ENCODE measurements at regions of chr1 and their contacts with region 1.

Region 1: GRCh38 chr1:89065079-89065868 is at the start of gene GBP1:
- DNase-seq: peak; percentile 58
- ATAC-seq: peak; percentile 70
- H3K4me3 ChIP-seq: peak within 1 kb of the TSS; percentile 50 to 94 (median 58)
- H3K4me3 Mint-ChIP-seq: peak within 1 kb of the TSS; percentile 96
- H3K27ac ChIP-seq: peak within 1 kb of the TSS; percentile 62 to 74
- H3K27ac Mint-ChIP-seq: peak within 1 kb of the TSS; percentile 92
- H3K4me1 ChIP-seq: peaks cover 21 to 30% of the 10 kb centered on the region in 2 donors
- H3K4me1 Mint-ChIP-seq: peaks cover 42% of the 10 kb centered on the region
- H3K27me3 ChIP-seq: no peaks in the 10 kb centered on the region
- H3K27me3 Mint-ChIP-seq: no peaks in the 10 kb centered on the region
- CTCF ChIP-seq: no peak
- total RNA-seq, gene GBP1: 9.4 and 9.8 TPM in 2 replicates

Region 2: DNA sequence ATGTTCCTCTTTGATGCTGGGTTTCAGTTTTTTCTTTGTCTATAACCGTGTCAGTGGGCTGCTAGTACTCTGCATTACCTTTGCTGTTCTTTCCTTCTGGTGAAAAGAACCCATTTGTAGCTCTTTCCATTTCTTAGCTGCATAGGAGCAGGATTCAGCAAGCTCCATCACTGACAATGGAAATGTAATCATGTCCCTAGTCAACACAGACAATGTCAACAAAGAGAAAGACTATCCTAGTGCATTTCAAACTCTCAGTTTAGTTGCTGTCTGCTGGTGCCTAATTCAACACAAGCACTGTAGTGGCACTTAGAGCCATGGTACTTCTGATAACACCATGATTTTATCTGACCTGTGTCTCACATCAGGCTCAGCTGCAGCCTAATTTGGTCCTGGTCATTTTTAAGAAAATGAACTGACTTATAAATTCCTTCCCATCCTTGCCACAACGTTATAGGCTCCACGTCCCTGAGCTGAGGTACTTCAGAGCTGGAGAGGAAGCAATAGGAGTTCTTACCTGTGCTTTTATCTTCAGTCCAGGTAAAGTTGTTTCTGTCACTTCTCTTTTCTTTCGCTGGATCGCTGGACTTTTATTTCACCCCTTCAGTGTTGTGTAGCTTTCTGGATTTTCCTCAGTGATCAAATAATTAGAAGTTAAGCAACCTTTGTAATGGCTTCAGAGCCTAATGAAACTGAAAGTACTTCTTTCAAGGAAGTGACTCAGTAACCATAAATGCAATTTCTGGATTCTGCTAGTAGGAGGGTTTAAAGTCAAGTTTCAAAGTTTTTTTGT is 42.9 kb before region 1 on chr1 and contains the start of gene GBP3:
- CTCF ChIA-PET with region 1: interaction called, 5 read pairs
- POLR2A ChIA-PET with region 1: no interaction called
- intact Hi-C with region 1: loop called (anchors 5 kb)
- DNase-seq: peak; percentile 65
- ATAC-seq: peak; percentile 68
- H3K4me3 ChIP-seq: peak within 1 kb of the TSS; percentile 62 to 87 (median 77)
- H3K4me3 Mint-ChIP-seq: peak within 1 kb of the TSS; percentile 90
- H3K27ac ChIP-seq: peak within 1 kb of the TSS; percentile 72 to 87
- H3K27ac Mint-ChIP-seq: peak within 1 kb of the TSS; percentile 89
- H3K4me1 ChIP-seq: peaks cover 13% of the 10 kb centered on the region in 2 donors
- H3K4me1 Mint-ChIP-seq: peaks cover 41% of the 10 kb centered on the region
- H3K27me3 ChIP-seq: no peaks in the 10 kb centered on the region
- H3K27me3 Mint-ChIP-seq: no peaks in the 10 kb centered on the region
- CTCF ChIP-seq: no peak
- total RNA-seq, gene GBP3: 16.4 and 20.8 TPM in 2 replicates

Region 3: DNA sequence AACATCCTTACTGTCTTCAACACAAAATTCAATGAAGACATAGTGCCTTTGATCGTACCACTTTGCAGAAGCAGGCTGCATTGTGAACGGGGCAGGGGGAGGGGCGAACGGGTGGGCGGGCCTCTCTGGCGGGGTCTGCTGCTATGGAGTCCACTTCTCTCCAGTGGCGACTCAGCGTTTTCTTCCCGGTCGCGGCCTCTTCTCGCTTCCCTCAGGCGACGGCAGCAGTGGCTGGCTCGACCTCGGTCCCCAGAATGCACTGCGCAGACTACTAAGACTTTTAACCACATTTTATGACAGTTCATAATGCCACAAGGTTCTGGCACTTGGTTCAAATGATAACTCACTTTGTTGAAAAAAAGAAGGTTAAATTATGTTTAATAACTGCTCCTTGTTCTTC is 39.4 kb after region 1 on chr1:
- CTCF ChIA-PET with region 1: no interaction called
- POLR2A ChIA-PET with region 1: no interaction called
- intact Hi-C with region 1: no loop called
- DNase-seq: no peak
- ATAC-seq: no peak
- H3K4me3 ChIP-seq: no peak overlapping the region
- H3K4me3 Mint-ChIP-seq: no peak overlapping the region
- H3K27ac ChIP-seq: no peak overlapping the region
- H3K27ac Mint-ChIP-seq: no peak overlapping the region
- H3K4me1 ChIP-seq: no peaks in the 10 kb centered on the region
- H3K4me1 Mint-ChIP-seq: no peaks in the 10 kb centered on the region
- H3K27me3 ChIP-seq: no peaks in the 10 kb centered on the region
- H3K27me3 Mint-ChIP-seq: peaks cover 6% of the 10 kb centered on the region
- CTCF ChIP-seq: no peak

Measured in B cell (primary cell).